CD8-positive, alpha-beta T cell (primary cell): ENCODE measurements at regions of chr17 and their contacts with region 1.

Region 1: GRCh38 chr17:74659898-74660297 is 36.4 kb upstream of the CD300E start:
- DNase-seq: no peak
- ATAC-seq: no peak
- H3K4me3 ChIP-seq: no peak overlapping the region
- H3K4me3 Mint-ChIP-seq: no peak overlapping the region
- H3K27ac ChIP-seq: no peak overlapping the region
- H3K27ac Mint-ChIP-seq: no peak overlapping the region
- H3K4me1 ChIP-seq: no peaks in the 10 kb centered on the region
- H3K4me1 Mint-ChIP-seq: peaks cover 6% of the 10 kb centered on the region
- H3K27me3 ChIP-seq: peaks cover 0 to 8% of the 10 kb centered on the region in 2 experiments
- H3K27me3 Mint-ChIP-seq: peaks cover 39% of the 10 kb centered on the region
- CTCF ChIP-seq: no peak

Region 2: DNA sequence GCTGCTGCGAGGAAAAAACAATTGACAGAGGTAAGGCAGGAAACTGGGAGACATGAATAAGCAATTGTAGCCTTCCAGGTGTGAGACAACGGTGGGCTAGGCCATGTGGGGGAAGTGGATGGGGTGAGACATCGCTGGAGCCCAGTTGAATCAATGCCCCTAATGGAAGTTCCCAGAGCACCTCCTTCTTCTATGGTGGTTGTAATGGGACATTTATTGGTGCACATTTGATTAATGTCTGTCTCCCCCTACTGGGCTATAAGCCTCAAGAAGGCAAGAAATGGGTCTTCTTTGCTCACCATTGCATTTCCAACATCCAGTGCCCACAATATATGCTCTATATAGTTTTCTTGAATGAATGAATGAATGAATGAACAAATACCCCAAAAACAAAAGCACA is 13.7 kb before region 1 on chr17:
- CTCF ChIA-PET with region 1: interaction called, 22 read pairs
- POLR2A ChIA-PET with region 1: no interaction called
- intact Hi-C with region 1: no loop called
- DNase-seq: peak in 2 of 9 experiments; percentile 26 to 48
- ATAC-seq: no peak
- H3K4me3 ChIP-seq: no peak overlapping the region
- H3K4me3 Mint-ChIP-seq: no peak overlapping the region
- H3K27ac ChIP-seq: no peak overlapping the region
- H3K27ac Mint-ChIP-seq: no peak overlapping the region
- H3K4me1 ChIP-seq: no peaks in the 10 kb centered on the region
- H3K4me1 Mint-ChIP-seq: no peaks in the 10 kb centered on the region
- H3K27me3 ChIP-seq: peaks cover 0 to 6% of the 10 kb centered on the region in 2 experiments
- H3K27me3 Mint-ChIP-seq: peaks cover 50% of the 10 kb centered on the region
- CTCF ChIP-seq: no peak

Region 3: GRCh38 chr17:74686761-74687160 is 26.9 kb after region 1 on chr17:
- CTCF ChIA-PET with region 1: interaction called, 11 read pairs
- POLR2A ChIA-PET with region 1: no interaction called
- intact Hi-C with region 1: no loop called
- DNase-seq: peak in 2 of 9 experiments; percentile 37 to 44
- ATAC-seq: no peak
- H3K4me3 ChIP-seq: no peak overlapping the region
- H3K4me3 Mint-ChIP-seq: no peak overlapping the region
- H3K27ac ChIP-seq: no peak overlapping the region
- H3K27ac Mint-ChIP-seq: no peak overlapping the region
- H3K4me1 ChIP-seq: no peaks in the 10 kb centered on the region
- H3K4me1 Mint-ChIP-seq: no peaks in the 10 kb centered on the region
- H3K27me3 ChIP-seq: no peaks in the 10 kb centered on the region
- H3K27me3 Mint-ChIP-seq: peaks cover 7% of the 10 kb centered on the region
- CTCF ChIP-seq: no peak

Region 4: GRCh38 chr17:74748529-74749365 is 88.8 kb after region 1 on chr17 and contains the start of gene NHERF1:
- CTCF ChIA-PET with region 1: interaction called, 67 read pairs
- POLR2A ChIA-PET with region 1: interaction called, 3 read pairs
- intact Hi-C with region 1: no loop called
- DNase-seq: peak; percentile 83 to 98 (median 92)
- ATAC-seq: peak; percentile 83
- H3K4me3 ChIP-seq: peak within 1 kb of the TSS; percentile 94 to 98
- H3K4me3 Mint-ChIP-seq: peak within 1 kb of the TSS; percentile 98
- H3K27ac ChIP-seq: peak within 1 kb of the TSS; percentile 60 to 80
- H3K27ac Mint-ChIP-seq: peak within 1 kb of the TSS; percentile 96
- H3K4me1 ChIP-seq: peaks cover 61% of the 10 kb centered on the region
- H3K4me1 Mint-ChIP-seq: peaks cover 67% of the 10 kb centered on the region
- H3K27me3 ChIP-seq: no peaks in the 10 kb centered on the region
- H3K27me3 Mint-ChIP-seq: no peaks in the 10 kb centered on the region
- CTCF ChIP-seq: no peak
- total RNA-seq, gene NHERF1: 72.5 to 73.7 TPM

Region 5: DNA sequence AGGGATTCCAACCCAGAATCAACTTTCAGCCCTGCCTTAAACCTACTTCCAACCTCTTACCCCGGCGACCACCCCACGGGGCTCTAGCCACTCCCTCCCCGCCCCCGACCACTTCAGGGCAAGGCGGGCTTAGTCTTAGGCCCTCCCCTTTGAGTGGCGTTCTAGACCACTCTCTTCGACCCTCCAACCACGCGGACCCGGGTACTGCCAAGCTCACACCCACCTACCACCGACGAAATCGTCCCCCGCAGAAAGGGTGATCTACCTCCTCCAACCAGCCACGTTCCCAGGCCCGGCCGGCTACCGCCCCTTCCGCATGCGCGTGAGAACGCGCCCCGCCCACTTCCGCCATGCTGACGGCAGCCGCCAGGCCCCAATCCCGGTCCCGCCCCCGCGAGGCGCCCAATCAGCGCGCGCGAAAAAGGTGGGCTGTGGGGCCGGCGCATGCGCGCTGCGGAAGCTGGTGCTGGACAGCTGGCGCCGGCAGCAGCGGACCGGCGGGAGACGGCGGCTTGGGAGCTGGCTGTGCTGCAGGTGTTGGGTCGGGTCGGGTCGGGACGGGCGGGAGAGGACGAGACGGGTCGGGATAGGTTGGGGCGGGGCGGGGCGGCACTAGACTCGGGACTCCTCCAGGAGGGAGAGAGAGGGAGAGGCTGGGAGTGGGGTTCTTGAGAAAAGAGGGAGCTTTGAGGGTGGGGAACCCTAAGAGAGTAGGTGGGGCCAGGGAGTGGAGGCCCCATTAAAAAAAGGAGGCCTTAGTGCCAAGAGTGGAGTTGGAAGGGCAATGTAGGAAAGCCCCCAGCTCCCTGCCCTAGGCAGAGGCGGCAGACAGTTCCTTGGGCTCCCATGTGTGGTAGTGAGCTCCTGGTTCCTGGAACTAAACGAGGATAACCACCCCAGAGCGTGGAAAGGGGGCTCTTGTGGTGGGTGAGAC is 116.4 kb after region 1 on chr17 and contains the start of gene NAT9:
- CTCF ChIA-PET with region 1: interaction called, 196 read pairs
- POLR2A ChIA-PET with region 1: interaction called, 12 read pairs
- intact Hi-C with region 1: no loop called
- DNase-seq: peak; percentile 97 to 100 (median 99)
- ATAC-seq: peak; percentile 74
- H3K4me3 ChIP-seq: peak within 1 kb of the TSS; percentile 68 to 83
- H3K4me3 Mint-ChIP-seq: peak within 1 kb of the TSS; percentile 99
- H3K27ac ChIP-seq: peak within 1 kb of the TSS; percentile 56 to 76
- H3K27ac Mint-ChIP-seq: peak within 1 kb of the TSS; percentile 97
- H3K4me1 ChIP-seq: peaks cover 47% of the 10 kb centered on the region
- H3K4me1 Mint-ChIP-seq: peaks cover 62% of the 10 kb centered on the region
- H3K27me3 ChIP-seq: no peaks in the 10 kb centered on the region
- H3K27me3 Mint-ChIP-seq: no peaks in the 10 kb centered on the region
- CTCF ChIP-seq: no peak
- total RNA-seq, gene NAT9: 37.9 to 41.1 TPM

Region 6: DNA sequence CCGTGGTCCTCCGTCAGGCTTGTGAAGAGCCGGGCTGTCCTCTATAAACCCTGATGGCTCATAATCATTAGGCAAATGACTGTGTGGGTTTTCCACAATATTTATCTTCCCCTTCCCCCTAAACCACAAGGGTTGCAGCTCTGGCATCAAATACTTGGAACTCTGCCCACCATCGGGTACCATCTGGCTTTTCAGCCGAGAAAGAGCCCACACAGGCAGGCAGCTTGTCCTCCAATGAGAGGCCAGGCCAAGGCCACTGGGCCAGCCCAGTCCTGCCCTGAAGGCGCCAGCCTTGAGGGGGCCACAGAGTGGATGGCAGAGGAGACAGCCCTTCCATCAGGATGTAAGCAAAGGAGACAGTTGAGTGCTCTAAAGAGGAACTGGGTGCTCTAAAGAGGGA is 148.0 kb after region 1 on chr17:
- CTCF ChIA-PET with region 1: interaction called, 13 read pairs
- POLR2A ChIA-PET with region 1: no interaction called
- intact Hi-C with region 1: no loop called
- DNase-seq: no peak
- ATAC-seq: no peak
- H3K4me3 ChIP-seq: no peak overlapping the region
- H3K4me3 Mint-ChIP-seq: no peak overlapping the region
- H3K27ac ChIP-seq: no peak overlapping the region
- H3K27ac Mint-ChIP-seq: no peak overlapping the region
- H3K4me1 ChIP-seq: no peaks in the 10 kb centered on the region
- H3K4me1 Mint-ChIP-seq: no peaks in the 10 kb centered on the region
- H3K27me3 ChIP-seq: no peaks in the 10 kb centered on the region
- H3K27me3 Mint-ChIP-seq: no peaks in the 10 kb centered on the region
- CTCF ChIP-seq: no peak

Region 7: DNA sequence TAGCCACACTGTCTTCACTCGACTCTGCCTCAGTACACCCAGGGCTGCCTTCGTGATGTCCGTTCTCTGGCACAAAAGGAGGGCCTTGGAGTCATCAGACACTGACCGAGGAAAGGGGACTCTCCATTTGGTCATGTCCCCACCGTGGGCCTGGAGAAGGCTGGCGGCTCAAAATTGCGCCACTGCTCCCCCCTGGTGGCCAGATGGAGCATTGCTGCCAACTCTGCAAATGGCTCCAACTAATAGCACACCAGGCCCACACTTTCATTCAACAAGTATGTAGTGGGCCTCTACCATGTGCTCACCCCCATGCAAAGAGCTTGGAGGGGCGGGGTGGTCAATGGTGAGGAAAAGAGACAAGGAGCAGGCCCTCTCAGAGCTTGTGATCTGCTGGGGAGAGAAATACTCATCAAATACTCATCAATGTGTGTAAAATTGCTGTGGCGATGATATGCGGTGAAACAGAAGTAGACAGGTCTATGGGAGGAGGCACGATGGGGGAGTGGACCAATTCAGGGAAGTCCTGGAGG is 205.0 kb after region 1 on chr17:
- CTCF ChIA-PET with region 1: interaction called, 106 read pairs
- POLR2A ChIA-PET with region 1: no interaction called
- intact Hi-C with region 1: loop called (anchors 1 kb)
- DNase-seq: peak; percentile 46 to 84 (median 73)
- ATAC-seq: peak; percentile 75
- H3K4me3 ChIP-seq: no peak overlapping the region
- H3K4me3 Mint-ChIP-seq: no peak overlapping the region
- H3K27ac ChIP-seq: no peak overlapping the region
- H3K27ac Mint-ChIP-seq: no peak overlapping the region
- H3K4me1 ChIP-seq: peaks cover 21% of the 10 kb centered on the region
- H3K4me1 Mint-ChIP-seq: peaks cover 13% of the 10 kb centered on the region
- H3K27me3 ChIP-seq: peaks cover 8 to 21% of the 10 kb centered on the region in 2 experiments
- H3K27me3 Mint-ChIP-seq: peaks cover 13% of the 10 kb centered on the region
- CTCF ChIP-seq: peak; percentile 92